Heart left ventricle (tissue), 16 donors: ENCODE measurements at regions of chr2 and their contacts with region 1.

Region 1: DNA sequence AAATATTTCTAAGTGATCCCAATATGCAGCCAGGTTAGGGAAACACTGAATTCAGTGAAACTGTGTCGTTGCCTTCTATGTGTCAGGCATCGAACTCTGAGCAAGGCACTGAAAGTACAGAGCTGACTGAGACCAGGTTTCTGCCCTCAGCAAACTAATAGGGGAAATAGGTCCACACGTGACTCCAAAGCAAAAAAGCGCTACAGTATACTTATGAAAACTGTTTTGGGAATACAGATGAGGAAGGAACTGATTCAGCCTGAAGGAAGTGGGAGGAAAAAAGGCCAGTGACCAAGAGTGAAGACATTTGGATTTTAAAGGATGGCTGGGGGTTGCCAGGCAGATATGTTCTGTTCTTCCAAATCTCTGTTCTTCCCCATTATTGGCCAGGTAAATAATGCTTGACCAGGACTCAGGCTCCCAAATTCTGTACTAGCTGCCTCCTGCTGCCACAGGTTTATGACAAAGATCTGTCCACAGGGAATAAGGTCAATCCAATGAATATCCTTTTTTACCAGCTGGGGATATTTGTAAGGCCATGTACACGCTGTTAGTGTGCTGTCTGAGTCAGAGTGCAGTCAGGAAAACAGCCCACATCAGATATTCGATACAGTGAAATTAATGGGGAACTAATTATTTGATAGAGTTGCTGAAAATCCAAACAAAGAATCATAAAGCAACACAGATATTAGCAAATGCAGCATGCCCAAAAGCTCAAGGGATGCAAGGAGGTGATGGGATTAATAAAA is 24.5 kb upstream of the INPP4A start:
- DNase-seq: no peak
- ATAC-seq: peak in 2 of 4 donors; percentile 65 to 89
- H3K4me3 ChIP-seq: no peak overlapping the region
- H3K27ac ChIP-seq: peak overlapping the region in 5 of 12 donors; percentile 11 to 62 (median 43)
- H3K4me1 ChIP-seq: peaks cover 0 to 14% (median 0%) of the 10 kb centered on the region in 12 donors
- H3K27me3 ChIP-seq: no peaks in the 10 kb centered on the region
- CTCF ChIP-seq: no peak
- POLR2A ChIP-seq: no peak

Region 2: GRCh38 chr2:98457045-98457652 is 37.0 kb after region 1 on chr2:
- intact Hi-C with region 1: loop called in 1 of 10 experiments (anchors 1 kb)
- DNase-seq: no peak
- ATAC-seq: no peak
- H3K4me3 ChIP-seq: no peak overlapping the region
- H3K27ac ChIP-seq: peak overlapping the region in 1 of 12 donors; percentile 17
- H3K4me1 ChIP-seq: peaks cover 0 to 100% (median 46%) of the 10 kb centered on the region in 12 donors
- H3K27me3 ChIP-seq: no peaks in the 10 kb centered on the region
- CTCF ChIP-seq: no peak
- POLR2A ChIP-seq: no peak

Region 3: DNA sequence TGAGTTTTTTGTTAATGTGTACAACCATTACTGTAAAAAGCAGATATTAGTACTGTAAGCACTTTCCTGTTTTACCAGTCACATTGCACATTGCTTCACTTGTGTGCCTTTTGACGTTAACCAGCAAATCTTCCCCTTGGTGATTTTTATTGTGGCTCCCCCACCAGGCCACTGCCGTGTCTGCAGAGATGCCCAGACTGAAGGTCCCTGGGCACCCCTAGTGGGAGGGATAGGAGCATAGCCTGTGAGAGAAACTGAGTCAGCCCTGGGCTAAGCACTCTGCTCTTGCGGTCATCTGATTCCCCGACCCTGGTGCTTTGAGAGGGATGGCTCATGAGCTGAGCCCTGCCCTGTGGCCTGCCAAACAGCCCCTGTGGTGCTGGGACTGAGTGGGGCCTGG is 97.9 kb after region 1 on chr2:
- intact Hi-C with region 1: loop called in 5 of 10 experiments (anchors 5 to 10 kb)
- DNase-seq: no peak
- ATAC-seq: peak in 3 of 4 donors; percentile 56 to 69 (median 61)
- H3K4me3 ChIP-seq: no peak overlapping the region
- H3K27ac ChIP-seq: peak overlapping the region in 1 of 12 donors; percentile 44
- H3K4me1 ChIP-seq: peaks cover 0 to 47% (median 17%) of the 10 kb centered on the region in 12 donors
- H3K27me3 ChIP-seq: no peaks in the 10 kb centered on the region
- CTCF ChIP-seq: peak in 11 of 12 donors; percentile 27 to 61 (median 54)
- POLR2A ChIP-seq: no peak

Region 4: GRCh38 chr2:98601532-98602132 is 181.5 kb after region 1 on chr2:
- intact Hi-C with region 1: loop called in 2 of 10 experiments (anchors 5 kb)
- DNase-seq: no peak
- ATAC-seq: peak; percentile 63 to 86 (median 82)
- H3K4me3 ChIP-seq: no peak overlapping the region
- H3K27ac ChIP-seq: no peak overlapping the region
- H3K4me1 ChIP-seq: peaks cover 2 to 27% (median 15%) of the 10 kb centered on the region in 12 donors
- H3K27me3 ChIP-seq: no peaks in the 10 kb centered on the region
- CTCF ChIP-seq: peak; percentile 42 to 71 (median 57)
- POLR2A ChIP-seq: no peak

Region 5: DNA sequence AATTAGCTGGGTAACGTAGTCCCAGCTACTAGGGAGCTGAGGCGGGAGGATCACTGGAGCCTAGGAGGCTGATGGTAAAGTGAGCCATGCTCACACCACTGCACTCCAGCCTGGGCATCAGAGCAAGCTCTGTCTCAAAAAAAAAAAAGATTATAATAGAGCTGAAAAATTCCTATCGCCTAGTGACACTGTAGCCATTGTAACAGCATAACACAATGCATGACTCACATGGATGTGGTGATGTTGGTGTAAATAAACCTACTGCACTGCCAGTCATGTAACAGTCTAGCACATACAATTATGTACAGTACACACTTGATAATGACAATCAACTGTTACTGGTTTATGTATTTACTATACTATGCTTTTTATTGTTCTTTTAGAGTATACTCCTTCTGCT is 271.2 kb after region 1 on chr2:
- intact Hi-C with region 1: no loop called
- DNase-seq: no peak
- ATAC-seq: peak in 2 of 4 donors; percentile 53 to 54
- H3K4me3 ChIP-seq: no peak overlapping the region
- H3K27ac ChIP-seq: no peak overlapping the region
- H3K4me1 ChIP-seq: peaks cover 0 to 21% (median 4%) of the 10 kb centered on the region in 12 donors
- H3K27me3 ChIP-seq: no peaks in the 10 kb centered on the region
- CTCF ChIP-seq: no peak
- POLR2A ChIP-seq: no peak